CD8-positive, alpha-beta T cell (primary cell): ENCODE measurements at regions of chr11 and their contacts with region 1.

Region 1: GRCh38 chr11:44911029-44911814 is 39.5 kb downstream of the TP53I11 start:
- DNase-seq: peak; percentile 62 to 90 (median 82)
- ATAC-seq: peak; percentile 64
- H3K4me3 ChIP-seq: no peak overlapping the region
- H3K4me3 Mint-ChIP-seq: no peak overlapping the region
- H3K27ac ChIP-seq: no peak overlapping the region
- H3K27ac Mint-ChIP-seq: no peak overlapping the region
- H3K4me1 ChIP-seq: no peaks in the 10 kb centered on the region
- H3K4me1 Mint-ChIP-seq: peaks cover 3% of the 10 kb centered on the region
- H3K27me3 ChIP-seq: no peaks in the 10 kb centered on the region
- H3K27me3 Mint-ChIP-seq: no peaks in the 10 kb centered on the region
- CTCF ChIP-seq: peak; percentile 61

Region 2: DNA sequence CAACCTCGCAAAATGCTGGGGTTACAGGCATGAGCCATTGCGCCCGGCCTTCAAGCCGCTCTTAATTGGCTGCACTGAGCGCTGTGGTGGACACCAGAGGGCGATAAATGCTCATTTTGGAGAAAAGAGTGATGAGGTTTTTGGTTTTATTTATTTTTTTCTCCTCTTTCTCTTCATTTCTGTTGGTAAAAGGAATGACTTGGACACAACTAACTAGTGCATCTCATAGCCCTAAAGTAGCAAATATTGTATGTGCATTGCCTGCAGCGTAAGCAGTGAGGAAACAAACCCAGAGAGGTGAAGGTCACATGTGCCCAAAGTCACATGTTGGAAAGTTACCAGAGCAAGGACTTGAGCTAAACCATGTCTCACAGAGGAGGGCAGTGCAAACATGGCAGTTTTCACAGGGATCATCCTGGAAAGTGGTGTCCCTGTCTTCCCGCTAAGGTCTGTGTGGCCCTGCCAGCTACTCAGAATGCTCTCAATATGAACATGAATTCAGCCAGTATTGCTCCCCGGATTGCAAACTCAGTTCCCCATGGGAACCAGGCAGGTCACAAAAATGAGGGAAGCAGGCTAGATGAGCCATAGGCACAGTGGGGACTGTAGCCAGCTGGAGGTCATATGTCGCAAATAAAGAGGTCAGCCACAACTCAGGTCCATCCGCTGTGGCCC is 354.4 kb before region 1 on chr11:
- CTCF ChIA-PET with region 1: interaction called, 7 read pairs
- POLR2A ChIA-PET with region 1: no interaction called
- intact Hi-C with region 1: loop called in 1 of 2 experiments (anchors 1 kb)
- DNase-seq: peak; percentile 43 to 79 (median 70)
- ATAC-seq: peak; percentile 71
- H3K4me3 ChIP-seq: no peak overlapping the region
- H3K4me3 Mint-ChIP-seq: no peak overlapping the region
- H3K27ac ChIP-seq: no peak overlapping the region
- H3K27ac Mint-ChIP-seq: no peak overlapping the region
- H3K4me1 ChIP-seq: peaks cover 11% of the 10 kb centered on the region
- H3K4me1 Mint-ChIP-seq: peaks cover 11% of the 10 kb centered on the region
- H3K27me3 ChIP-seq: no peaks in the 10 kb centered on the region
- H3K27me3 Mint-ChIP-seq: no peaks in the 10 kb centered on the region
- CTCF ChIP-seq: peak; percentile 76

Region 3: DNA sequence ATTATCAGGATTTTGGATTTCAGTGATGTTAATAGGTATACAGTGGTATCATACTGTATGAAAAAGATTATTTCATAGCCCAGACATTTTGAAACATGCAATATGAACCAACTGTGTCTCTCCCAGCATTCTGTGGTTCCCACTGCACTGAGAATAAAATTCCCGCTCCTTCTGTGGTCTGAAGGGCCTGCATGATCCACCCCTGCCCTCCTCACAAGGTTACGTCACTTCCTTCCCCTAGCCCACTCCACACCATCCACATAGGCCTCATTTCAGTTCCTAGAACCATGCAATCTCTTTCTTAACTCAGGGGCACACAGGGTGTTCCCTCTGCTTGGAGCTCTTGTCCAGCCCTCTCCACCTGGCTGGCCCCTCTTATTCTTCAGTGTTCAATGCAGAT is 81.4 kb before region 1 on chr11:
- CTCF ChIA-PET with region 1: interaction called, 3 read pairs
- POLR2A ChIA-PET with region 1: no interaction called
- intact Hi-C with region 1: loop called in 1 of 2 experiments (anchors 5 kb)
- DNase-seq: no peak
- ATAC-seq: no peak
- H3K4me3 ChIP-seq: no peak overlapping the region
- H3K4me3 Mint-ChIP-seq: no peak overlapping the region
- H3K27ac ChIP-seq: no peak overlapping the region
- H3K27ac Mint-ChIP-seq: no peak overlapping the region
- H3K4me1 ChIP-seq: no peaks in the 10 kb centered on the region
- H3K4me1 Mint-ChIP-seq: no peaks in the 10 kb centered on the region
- H3K27me3 ChIP-seq: no peaks in the 10 kb centered on the region
- H3K27me3 Mint-ChIP-seq: peaks cover 2% of the 10 kb centered on the region
- CTCF ChIP-seq: no peak

Region 4: DNA sequence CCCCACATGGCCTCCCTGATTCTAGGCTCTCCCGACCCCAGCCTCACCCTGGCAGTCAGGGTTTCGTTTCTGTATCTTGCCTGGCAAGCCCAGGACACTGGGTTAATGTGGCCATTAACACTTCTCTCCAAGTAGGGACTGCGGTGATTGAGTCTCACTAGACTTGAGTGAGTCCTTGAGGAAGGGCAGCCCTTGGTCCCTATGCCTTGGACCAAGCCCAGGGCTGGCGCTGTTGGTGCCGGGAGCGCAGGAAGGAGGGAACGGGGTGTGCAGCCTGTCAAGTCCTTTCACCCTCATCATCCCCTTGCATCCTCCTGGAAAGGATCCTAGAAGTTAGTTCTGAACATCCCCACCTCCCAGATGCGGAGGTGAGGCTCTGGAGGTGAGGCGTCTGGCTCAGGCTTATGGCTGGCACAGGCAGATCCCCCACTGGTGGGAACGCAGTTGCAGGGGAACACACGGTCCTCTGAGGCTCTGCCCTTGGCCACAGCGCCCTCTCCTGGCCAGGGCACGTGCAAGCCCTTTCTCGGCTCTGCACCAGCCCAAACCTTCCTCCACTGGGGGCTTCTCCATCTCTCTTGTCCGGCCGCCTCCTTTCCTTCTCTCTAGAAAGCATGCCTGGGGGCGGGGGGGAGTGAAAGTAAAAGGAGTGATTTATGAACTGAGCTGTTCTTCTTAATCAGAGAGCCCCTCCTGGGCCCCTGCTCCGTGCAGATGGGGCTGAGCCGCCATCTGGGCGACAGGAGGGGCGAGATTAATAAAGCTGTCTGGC is 17.2 kb before region 1 on chr11:
- CTCF ChIA-PET with region 1: interaction called, 11 read pairs
- POLR2A ChIA-PET with region 1: no interaction called
- intact Hi-C with region 1: no loop called
- DNase-seq: peak in 8 of 9 experiments; percentile 48 to 72 (median 60)
- ATAC-seq: peak; percentile 55
- H3K4me3 ChIP-seq: no peak overlapping the region
- H3K4me3 Mint-ChIP-seq: no peak overlapping the region
- H3K27ac ChIP-seq: no peak overlapping the region
- H3K27ac Mint-ChIP-seq: no peak overlapping the region
- H3K4me1 ChIP-seq: no peaks in the 10 kb centered on the region
- H3K4me1 Mint-ChIP-seq: no peaks in the 10 kb centered on the region
- H3K27me3 ChIP-seq: no peaks in the 10 kb centered on the region
- H3K27me3 Mint-ChIP-seq: no peaks in the 10 kb centered on the region
- CTCF ChIP-seq: peak; percentile 54

Region 5: DNA sequence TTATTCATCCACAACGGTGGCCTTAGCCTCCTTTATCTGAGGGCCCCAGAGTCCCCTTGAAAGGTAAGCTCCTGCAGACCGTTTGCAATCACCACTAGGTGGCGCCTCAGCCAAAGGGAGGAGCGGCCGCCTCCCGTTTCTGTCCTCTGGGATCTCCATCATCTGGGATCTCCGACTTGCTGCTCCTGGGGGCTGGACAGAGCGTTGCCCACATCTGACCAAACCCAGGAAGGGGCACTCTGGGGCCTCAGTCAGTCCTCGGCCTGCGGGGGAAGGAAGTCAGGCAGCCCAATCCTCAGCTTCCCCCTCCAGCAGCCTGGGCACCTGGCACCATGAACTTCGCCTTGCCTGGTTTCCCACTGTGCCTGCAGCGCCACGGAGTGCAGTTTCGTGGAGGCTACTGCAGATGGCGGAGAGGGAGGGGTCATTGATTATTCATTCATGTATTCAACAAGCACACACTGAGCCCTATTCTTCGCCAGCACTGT is 16.0 kb after region 1 on chr11:
- CTCF ChIA-PET with region 1: interaction called, 22 read pairs
- POLR2A ChIA-PET with region 1: no interaction called
- intact Hi-C with region 1: no loop called
- DNase-seq: peak; percentile 24 to 77 (median 59)
- ATAC-seq: peak; percentile 52
- H3K4me3 ChIP-seq: no peak overlapping the region
- H3K4me3 Mint-ChIP-seq: no peak overlapping the region
- H3K27ac ChIP-seq: no peak overlapping the region
- H3K27ac Mint-ChIP-seq: no peak overlapping the region
- H3K4me1 ChIP-seq: no peaks in the 10 kb centered on the region
- H3K4me1 Mint-ChIP-seq: no peaks in the 10 kb centered on the region
- H3K27me3 ChIP-seq: peaks cover 0 to 2% of the 10 kb centered on the region in 2 experiments
- H3K27me3 Mint-ChIP-seq: no peaks in the 10 kb centered on the region
- CTCF ChIP-seq: peak; percentile 79

Region 6: DNA sequence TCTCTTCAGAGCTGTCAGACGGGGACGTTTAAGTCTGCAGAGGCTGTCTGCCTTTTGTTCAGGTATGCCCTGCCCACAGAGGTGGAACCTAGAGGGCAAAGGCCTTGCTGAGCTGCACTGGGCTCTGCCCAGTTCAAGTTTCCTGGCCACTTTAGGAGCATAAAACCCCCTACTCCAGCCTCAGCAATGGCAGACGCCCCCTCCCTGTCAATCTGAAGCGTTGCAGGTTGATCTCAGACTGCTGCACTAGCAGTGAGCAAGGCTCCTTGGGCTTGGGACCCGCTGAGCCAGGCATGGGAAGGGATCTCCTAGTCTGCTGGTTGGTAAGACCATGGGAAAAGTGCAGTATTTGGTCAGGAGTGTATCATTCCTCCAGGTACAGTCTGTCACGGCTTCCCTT is 106.1 kb after region 1 on chr11:
- CTCF ChIA-PET with region 1: no interaction called
- POLR2A ChIA-PET with region 1: no interaction called
- intact Hi-C with region 1: no loop called
- DNase-seq: no peak
- ATAC-seq: no peak
- H3K4me3 ChIP-seq: no peak overlapping the region
- H3K4me3 Mint-ChIP-seq: no peak overlapping the region
- H3K27ac ChIP-seq: no peak overlapping the region
- H3K27ac Mint-ChIP-seq: no peak overlapping the region
- H3K4me1 ChIP-seq: no peaks in the 10 kb centered on the region
- H3K4me1 Mint-ChIP-seq: peaks cover 8% of the 10 kb centered on the region
- H3K27me3 ChIP-seq: peaks cover 0 to 2% of the 10 kb centered on the region in 2 experiments
- H3K27me3 Mint-ChIP-seq: peaks cover 14% of the 10 kb centered on the region
- CTCF ChIP-seq: no peak